ENCODE measurements at regions of chr1 and their contacts with region 1.

Region 1: GRCh38 chr1:59947047-59947938 is 20.7 kb upstream of the CYP2J2 start:
- DNase-seq: peak; percentile 36 to 91 (median 78)

Region 2: DNA sequence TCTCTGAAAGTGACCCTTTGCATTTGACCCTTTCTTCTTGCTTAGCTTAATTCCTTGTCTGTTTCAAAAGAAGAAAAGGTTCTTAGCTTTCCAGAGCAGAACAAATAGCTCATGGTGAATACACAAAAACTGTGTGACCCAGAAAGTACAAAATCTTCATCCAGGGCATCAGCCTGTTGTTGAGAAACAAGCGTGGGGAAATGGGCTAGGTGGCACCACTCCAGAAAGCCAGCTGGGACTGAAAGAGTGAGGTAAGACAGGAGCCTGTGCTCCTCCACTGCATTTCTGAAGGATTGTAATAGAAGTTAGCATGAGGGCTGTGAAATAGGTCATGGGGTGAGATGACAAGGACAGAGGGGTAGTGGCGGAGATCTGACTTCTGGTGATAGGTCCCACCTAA is 66.6 kb before region 1 on chr1:
- intact Hi-C with region 1: loop called (anchors 5 kb)
- DNase-seq: peak in 4 of 42 donors; percentile 15 to 47 (median 18)

Region 3: GRCh38 chr1:59903141-59903754 is 44.0 kb before region 1 on chr1:
- intact Hi-C with region 1: loop called (anchors 2 kb)
- DNase-seq: peak in 38 of 42 donors; percentile 18 to 88 (median 60)

Region 4: GRCh38 chr1:60134716-60135115 is 187.4 kb after region 1 on chr1:
- intact Hi-C with region 1: no loop called
- DNase-seq: no peak

Measured in head of caudate nucleus (tissue), 42 donors.